PC-3 (cell line): ENCODE measurements at regions of chr6 and their contacts with region 1.

Region 1: GRCh38 chr6:64502801-64503200 is 867.2 kb downstream of the PHF3 start:
- DNase-seq: no peak
- ATAC-seq: no peak
- H3K4me3 ChIP-seq: no peak overlapping the region
- H3K27ac ChIP-seq: no peak overlapping the region
- H3K4me1 ChIP-seq: peaks cover 15% of the 10 kb centered on the region
- H3K27me3 ChIP-seq: no peaks in the 10 kb centered on the region
- CTCF ChIP-seq: no peak

Region 2: GRCh38 chr6:64955435-64955848 is 452.6 kb after region 1 on chr6:
- CTCF ChIA-PET with region 1: no interaction called
- POLR2A ChIA-PET with region 1: interaction called, 12 read pairs
- intact Hi-C with region 1: no loop called
- DNase-seq: peak; percentile 18
- ATAC-seq: peak; percentile 27; the same call in 1 of the 2 replicates
- H3K4me3 ChIP-seq: no peak overlapping the region
- H3K27ac ChIP-seq: no peak overlapping the region
- H3K4me1 ChIP-seq: no peaks in the 10 kb centered on the region
- H3K27me3 ChIP-seq: no peaks in the 10 kb centered on the region
- CTCF ChIP-seq: no peak